ENCODE measurements at regions of chr14 and their contacts with region 1.

Region 1: GRCh38 chr14:43539210-43539609 is 967.9 kb downstream of the FSCB start:
- DNase-seq: peak; percentile 50
- ATAC-seq: peak; percentile 89
- H3K4me3 ChIP-seq: peak overlapping the region; percentile 32 to 55 (median 50); a peak in 4 of 6 replicates
- H3K27ac ChIP-seq: no peak overlapping the region
- H3K4me1 ChIP-seq: 0 out of 2 replicates have a peak, but pooled peaks cover 6% of the 10 kb centered on the region
- H3K27me3 ChIP-seq: no peaks in the 10 kb centered on the region
- CTCF ChIP-seq: peak; percentile 64
- EP300 ChIP-seq: no peak
- POLR2A ChIP-seq: no peak
- RAD21 ChIP-seq: no peak; the same call in 1 of the 2 replicates

Region 2: DNA sequence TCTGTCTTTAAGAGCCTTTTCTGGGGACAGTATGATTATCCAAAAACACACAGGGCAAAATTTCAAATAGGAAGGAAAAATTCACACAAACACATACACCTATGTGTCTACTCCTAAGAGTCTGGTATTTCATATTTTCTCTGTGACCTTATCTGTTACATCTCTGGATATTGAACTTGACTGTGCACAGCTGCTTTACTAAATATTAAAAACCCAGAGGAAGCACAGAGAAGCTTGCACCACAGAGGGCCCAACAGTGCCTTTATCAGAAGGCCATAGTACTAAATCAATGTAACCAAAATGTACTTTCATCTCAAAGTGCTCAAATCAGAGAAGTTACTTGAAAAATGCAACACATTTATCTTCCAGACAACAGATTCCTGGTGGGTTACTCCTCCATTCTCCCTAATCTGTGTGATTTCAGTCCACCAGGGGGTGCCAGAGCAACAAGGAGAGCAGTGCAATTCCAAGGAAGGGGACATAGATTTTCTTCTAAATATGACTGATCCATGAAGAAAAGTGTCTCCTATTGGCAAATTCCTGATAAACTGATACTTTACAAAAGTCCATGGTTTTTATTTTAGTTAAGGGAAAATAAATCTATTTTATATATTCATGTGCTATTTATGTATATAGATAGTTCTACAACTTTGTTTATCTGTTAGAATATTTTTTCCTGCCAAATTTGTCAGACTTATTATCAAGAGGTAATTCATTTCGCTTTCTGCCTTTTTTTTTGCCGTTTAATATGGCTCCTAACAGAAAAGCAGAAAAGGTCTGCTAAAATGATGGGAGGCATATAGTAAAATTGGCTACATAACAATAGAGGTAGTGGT is 1314.9 kb before region 1 on chr14:
- CTCF ChIA-PET with region 1: no interaction called
- POLR2A ChIA-PET with region 1: no interaction called
- in situ Hi-C with region 1: no loop called
- intact Hi-C with region 1: loop called (anchors 5 kb)
- DNase-seq: peak; percentile 60
- ATAC-seq: peak; percentile 96
- H3K4me3 ChIP-seq: no peak overlapping the region
- H3K27ac ChIP-seq: no peak overlapping the region
- H3K4me1 ChIP-seq: no peaks in the 10 kb centered on the region
- H3K27me3 ChIP-seq: no peaks in the 10 kb centered on the region
- CTCF ChIP-seq: peak; percentile 77
- EP300 ChIP-seq: no peak
- POLR2A ChIP-seq: no peak
- RAD21 ChIP-seq: peak; percentile 41; the same call in 1 of the 2 replicates

Region 3: DNA sequence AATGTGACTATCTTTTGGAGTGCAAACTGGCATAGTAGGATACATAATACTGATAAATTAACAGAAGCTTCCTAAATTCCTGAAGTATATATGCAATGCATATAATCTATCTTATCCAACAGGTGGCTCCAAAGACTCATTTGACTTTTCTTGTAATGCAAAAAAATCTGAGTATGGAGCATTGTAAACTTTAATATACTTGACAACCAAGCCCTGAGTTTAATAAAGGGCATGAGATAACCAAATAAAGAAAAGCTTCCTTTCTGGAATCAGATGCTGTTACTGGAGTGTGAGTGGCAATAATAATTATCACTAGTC is 35.7 kb before region 1 on chr14:
- CTCF ChIA-PET with region 1: no interaction called
- POLR2A ChIA-PET with region 1: no interaction called
- in situ Hi-C with region 1: no loop called
- intact Hi-C with region 1: loop called (anchors 1 kb)
- DNase-seq: peak; percentile 17
- ATAC-seq: no peak
- H3K4me3 ChIP-seq: no peak overlapping the region
- H3K27ac ChIP-seq: no peak overlapping the region
- H3K4me1 ChIP-seq: no peaks in the 10 kb centered on the region
- H3K27me3 ChIP-seq: no peaks in the 10 kb centered on the region
- CTCF ChIP-seq: peak; percentile 39
- EP300 ChIP-seq: no peak
- POLR2A ChIP-seq: no peak
- RAD21 ChIP-seq: no peak; the same call in 1 of the 2 replicates

Region 4: GRCh38 chr14:43786066-43786762 is 247.0 kb after region 1 on chr14:
- CTCF ChIA-PET with region 1: no interaction called
- POLR2A ChIA-PET with region 1: no interaction called
- in situ Hi-C with region 1: loop called (anchors 10 kb)
- intact Hi-C with region 1: no loop called
- DNase-seq: no peak
- ATAC-seq: no peak
- H3K4me3 ChIP-seq: no peak overlapping the region
- H3K27ac ChIP-seq: no peak overlapping the region
- H3K4me1 ChIP-seq: peaks cover 16% of the 10 kb centered on the region
- H3K27me3 ChIP-seq: no peaks in the 10 kb centered on the region
- CTCF ChIP-seq: no peak
- EP300 ChIP-seq: no peak
- POLR2A ChIP-seq: no peak
- RAD21 ChIP-seq: no peak

Region 5: GRCh38 chr14:43795600-43796228 is 256.5 kb after region 1 on chr14:
- CTCF ChIA-PET with region 1: interaction called, 9 read pairs
- POLR2A ChIA-PET with region 1: no interaction called
- in situ Hi-C with region 1: no loop called
- intact Hi-C with region 1: loop called (anchors 1 kb)
- DNase-seq: peak; percentile 50
- ATAC-seq: peak; percentile 65
- H3K4me3 ChIP-seq: no peak overlapping the region
- H3K27ac ChIP-seq: no peak overlapping the region
- H3K4me1 ChIP-seq: peaks cover 11% of the 10 kb centered on the region
- H3K27me3 ChIP-seq: no peaks in the 10 kb centered on the region
- CTCF ChIP-seq: peak; percentile 69
- EP300 ChIP-seq: no peak
- POLR2A ChIP-seq: no peak
- RAD21 ChIP-seq: peak; percentile 83

Region 6: GRCh38 chr14:43894534-43894933 is 355.3 kb after region 1 on chr14:
- CTCF ChIA-PET with region 1: no interaction called
- POLR2A ChIA-PET with region 1: no interaction called
- in situ Hi-C with region 1: no loop called
- intact Hi-C with region 1: loop called (anchors 10 kb)
- DNase-seq: no peak
- ATAC-seq: no peak
- H3K4me3 ChIP-seq: no peak overlapping the region
- H3K27ac ChIP-seq: no peak overlapping the region
- H3K4me1 ChIP-seq: peaks cover 34% of the 10 kb centered on the region
- H3K27me3 ChIP-seq: no peaks in the 10 kb centered on the region
- CTCF ChIP-seq: peak; percentile 36
- EP300 ChIP-seq: no peak
- POLR2A ChIP-seq: no peak
- RAD21 ChIP-seq: no peak

Region 7: GRCh38 chr14:44149597-44149996 is 610.4 kb after region 1 on chr14:
- CTCF ChIA-PET with region 1: no interaction called
- POLR2A ChIA-PET with region 1: no interaction called
- in situ Hi-C with region 1: no loop called
- intact Hi-C with region 1: loop called (anchors 1 kb)
- DNase-seq: peak; percentile 55
- ATAC-seq: peak; percentile 97
- H3K4me3 ChIP-seq: no peak overlapping the region
- H3K27ac ChIP-seq: no peak overlapping the region
- H3K4me1 ChIP-seq: no peaks in the 10 kb centered on the region
- H3K27me3 ChIP-seq: no peaks in the 10 kb centered on the region
- CTCF ChIP-seq: peak; percentile 82
- EP300 ChIP-seq: no peak
- POLR2A ChIP-seq: no peak
- RAD21 ChIP-seq: peak; percentile 40; the same call in 1 of the 2 replicates

Measured in HepG2 (cell line).